ENCODE measurements at regions of chr16 and their contacts with region 1.

Region 1: DNA sequence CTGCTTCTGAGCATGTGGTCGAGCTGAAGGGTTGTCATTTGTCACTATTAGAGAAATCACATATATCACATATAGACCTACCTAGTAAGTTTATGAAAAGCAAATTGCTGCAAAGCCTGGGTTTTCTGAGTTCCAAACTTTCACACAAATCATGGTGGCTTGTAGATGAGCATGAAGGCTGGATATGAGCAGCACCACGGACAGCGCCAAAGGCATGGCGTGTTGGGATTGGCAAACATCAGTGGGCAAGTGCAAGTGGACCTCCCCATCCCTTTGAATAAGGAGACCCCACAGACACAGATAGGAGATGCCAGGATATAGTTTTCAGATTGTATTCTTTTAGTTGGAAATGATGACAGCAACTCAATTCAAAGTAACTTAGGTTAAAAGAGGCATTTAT is 77.6 kb upstream of the CACNG3 start:
- DNase-seq: no peak
- H3K4me3 ChIP-seq: no peak overlapping the region
- H3K27ac ChIP-seq: no peak overlapping the region
- H3K4me1 ChIP-seq: no peaks in the 10 kb centered on the region
- H3K27me3 ChIP-seq: no peaks in the 10 kb centered on the region
- CTCF ChIP-seq: no peak
- EP300 ChIP-seq: no peak
- POLR2A ChIP-seq: no peak

Region 2: DNA sequence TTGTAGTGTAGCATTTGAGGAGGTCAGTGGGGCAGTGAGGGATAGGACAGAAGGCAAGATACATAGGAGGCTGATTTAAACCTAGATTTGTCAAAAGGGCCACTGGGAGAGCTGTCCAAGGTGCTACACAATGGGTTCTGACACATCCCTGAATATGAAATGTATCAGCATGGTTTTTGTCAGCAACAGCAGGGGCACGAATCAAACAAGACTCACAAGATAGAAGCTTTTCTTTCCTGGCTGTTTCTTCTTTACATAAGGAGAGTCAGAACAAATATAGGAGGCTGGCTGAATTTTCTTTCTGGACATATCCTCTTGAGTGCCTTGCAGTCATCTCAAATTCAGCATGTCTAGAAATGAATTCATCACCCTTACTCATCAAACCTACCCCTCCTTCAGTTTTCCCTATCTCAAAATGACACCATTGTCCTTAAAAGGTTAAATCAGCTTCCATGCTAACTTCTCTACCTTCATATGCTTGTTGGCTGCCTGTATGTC is 1537.3 kb before region 1 on chr16:
- intact Hi-C with region 1: loop called (anchors 10 kb)
- DNase-seq: no peak
- H3K4me3 ChIP-seq: no peak overlapping the region
- H3K27ac ChIP-seq: no peak overlapping the region
- H3K4me1 ChIP-seq: no peaks in the 10 kb centered on the region
- H3K27me3 ChIP-seq: peaks cover 0 to 18% (median 0%) of the 10 kb centered on the region in 4 donors
- CTCF ChIP-seq: no peak
- EP300 ChIP-seq: no peak
- POLR2A ChIP-seq: no peak

Region 3: GRCh38 chr16:24282141-24282540 is 103.6 kb after region 1 on chr16:
- intact Hi-C with region 1: no loop called
- DNase-seq: no peak
- H3K4me3 ChIP-seq: no peak overlapping the region
- H3K27ac ChIP-seq: no peak overlapping the region
- H3K4me1 ChIP-seq: no peaks in the 10 kb centered on the region
- H3K27me3 ChIP-seq: peaks cover 0 to 7% (median 0%) of the 10 kb centered on the region in 4 donors
- CTCF ChIP-seq: no peak
- EP300 ChIP-seq: no peak
- POLR2A ChIP-seq: no peak